Posterior vena cava (tissue), 2 donors: ENCODE measurements at regions of chr17 and their contacts with region 1.

Region 1: DNA sequence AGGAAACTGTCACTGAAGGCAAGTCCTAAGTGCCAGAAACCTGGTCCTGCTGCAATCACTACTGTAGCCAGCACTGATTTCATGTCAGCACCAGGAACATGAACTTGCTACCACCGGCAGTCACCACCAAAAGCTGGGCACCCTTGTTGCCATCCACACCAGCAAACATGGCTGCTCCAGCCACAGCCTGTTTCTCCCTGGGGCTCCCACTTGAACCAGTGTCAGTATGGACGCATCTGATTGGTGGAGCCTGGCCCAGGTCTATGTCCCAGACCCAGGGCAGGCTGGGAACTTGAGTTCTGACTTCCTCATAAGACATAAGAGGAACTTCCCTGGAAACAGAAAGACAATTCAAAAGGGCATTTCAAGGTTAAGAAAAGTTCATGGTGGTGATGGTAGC is 56.5 kb downstream of the COPRS start:
- DNase-seq: peak; percentile 76

Region 2: GRCh38 chr17:31788956-31789355 is 13.5 kb before region 1 on chr17:
- intact Hi-C with region 1: loop called in 1 of 2 experiments (anchors 1 kb)
- DNase-seq: no peak